ENCODE measurements at regions of chr2 and their contacts with region 1.

Region 1: GRCh38 chr2:112692496-112692911 is 28.3 kb upstream of the NT5DC4 start:
- DNase-seq: peak; percentile 85
- ATAC-seq: peak; percentile 83
- H3K4me3 ChIP-seq: peak overlapping the region in 1 of 2 experiments; percentile 34; a peak in 2 of 4 replicates
- H3K27ac ChIP-seq: peak overlapping the region; percentile 37
- H3K4me1 ChIP-seq: peaks cover 38 to 53% of the 10 kb centered on the region in 2 experiments
- H3K27me3 ChIP-seq: no peaks in the 10 kb centered on the region
- CTCF ChIP-seq: no peak
- POLR2A ChIP-seq: no peak
- RAD21 ChIP-seq: no peak

Region 2: GRCh38 chr2:112332123-112332696 is 360.3 kb before region 1 on chr2:
- CTCF ChIA-PET with region 1: no interaction called
- POLR2A ChIA-PET with region 1: no interaction called
- RAD21 ChIA-PET with region 1: no interaction called
- intact Hi-C with region 1: no loop called
- DNase-seq: no peak
- ATAC-seq: no peak
- H3K4me3 ChIP-seq: no peak overlapping the region
- H3K27ac ChIP-seq: no peak overlapping the region
- H3K4me1 ChIP-seq: no peaks in the 10 kb centered on the region
- H3K27me3 ChIP-seq: no peaks in the 10 kb centered on the region
- CTCF ChIP-seq: no peak
- POLR2A ChIP-seq: no peak
- RAD21 ChIP-seq: no peak

Region 3: GRCh38 chr2:112626604-112627059 is 65.9 kb before region 1 on chr2:
- CTCF ChIA-PET with region 1: interaction called, 8 read pairs
- POLR2A ChIA-PET with region 1: interaction called, 3 read pairs
- RAD21 ChIA-PET with region 1: interaction called in 1 of 2 experiments, 3 read pairs
- intact Hi-C with region 1: loop called (anchors 1 kb)
- DNase-seq: no peak
- ATAC-seq: peak; percentile 75
- H3K4me3 ChIP-seq: peak overlapping the region in 1 of 2 experiments; percentile 38; a peak in 3 of 4 replicates
- H3K27ac ChIP-seq: peak overlapping the region; percentile 49
- H3K4me1 ChIP-seq: peaks cover 56 to 100% of the 10 kb centered on the region in 2 experiments
- H3K27me3 ChIP-seq: no peaks in the 10 kb centered on the region
- CTCF ChIP-seq: peak; percentile 91 to 96 (median 95)
- POLR2A ChIP-seq: no peak
- RAD21 ChIP-seq: peak; percentile 97

Region 4: GRCh38 chr2:112645310-112646101 is 47.0 kb before region 1 on chr2 and contains the start of gene SLC20A1:
- CTCF ChIA-PET with region 1: interaction called, 6 read pairs
- POLR2A ChIA-PET with region 1: interaction called, 11 read pairs
- RAD21 ChIA-PET with region 1: no interaction called
- intact Hi-C with region 1: loop called (anchors 2 kb)
- DNase-seq: peak; percentile 86
- ATAC-seq: peak; percentile 85
- H3K4me3 ChIP-seq: peak within 1 kb of the TSS; percentile 84 to 88
- H3K27ac ChIP-seq: peak within 1 kb of the TSS; percentile 85
- H3K4me1 ChIP-seq: peaks cover 48 to 61% of the 10 kb centered on the region in 2 experiments
- H3K27me3 ChIP-seq: no peaks in the 10 kb centered on the region
- CTCF ChIP-seq: peak in 1 of 3 experiments; percentile 34; a peak in 2 of 6 replicates
- POLR2A ChIP-seq: peak; percentile 94
- RAD21 ChIP-seq: no peak
- total RNA-seq, gene SLC20A1: 154 TPM

Region 5: DNA sequence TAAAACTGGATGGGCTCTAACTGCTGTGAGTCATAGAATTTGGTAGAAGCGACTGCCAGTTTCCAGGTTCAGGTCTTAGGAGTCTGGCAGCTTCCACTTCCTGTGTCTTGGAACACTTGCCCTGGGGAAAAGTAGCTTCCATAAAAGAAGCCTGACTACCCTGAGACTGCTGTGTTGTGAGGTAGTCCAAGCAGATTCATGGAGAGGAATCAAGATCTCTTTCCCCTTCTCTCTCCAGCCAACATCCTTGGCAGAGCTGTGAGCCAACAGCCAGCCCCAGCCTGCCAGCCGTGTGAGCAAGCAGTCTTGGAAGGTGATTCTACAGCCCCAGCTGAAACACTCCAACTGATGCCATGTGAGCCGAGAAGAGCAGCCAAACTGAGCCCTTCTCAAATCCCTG is 13.0 kb before region 1 on chr2:
- CTCF ChIA-PET with region 1: interaction called, 14 read pairs
- POLR2A ChIA-PET with region 1: no interaction called
- RAD21 ChIA-PET with region 1: no interaction called
- intact Hi-C with region 1: no loop called
- DNase-seq: no peak
- ATAC-seq: no peak
- H3K4me3 ChIP-seq: no peak overlapping the region
- H3K27ac ChIP-seq: no peak overlapping the region
- H3K4me1 ChIP-seq: peaks cover 0 to 8% of the 10 kb centered on the region in 2 experiments; a peak in 1 of 4 replicates
- H3K27me3 ChIP-seq: no peaks in the 10 kb centered on the region
- CTCF ChIP-seq: no peak
- POLR2A ChIP-seq: no peak
- RAD21 ChIP-seq: no peak